HEK293T (cell line): ENCODE measurements at regions of chr11 and their contacts with region 1.

Region 1: GRCh38 chr11:46593550-46594373 is at the start of gene AMBRA1:
- DNase-seq: peak; percentile 77

Region 2: DNA sequence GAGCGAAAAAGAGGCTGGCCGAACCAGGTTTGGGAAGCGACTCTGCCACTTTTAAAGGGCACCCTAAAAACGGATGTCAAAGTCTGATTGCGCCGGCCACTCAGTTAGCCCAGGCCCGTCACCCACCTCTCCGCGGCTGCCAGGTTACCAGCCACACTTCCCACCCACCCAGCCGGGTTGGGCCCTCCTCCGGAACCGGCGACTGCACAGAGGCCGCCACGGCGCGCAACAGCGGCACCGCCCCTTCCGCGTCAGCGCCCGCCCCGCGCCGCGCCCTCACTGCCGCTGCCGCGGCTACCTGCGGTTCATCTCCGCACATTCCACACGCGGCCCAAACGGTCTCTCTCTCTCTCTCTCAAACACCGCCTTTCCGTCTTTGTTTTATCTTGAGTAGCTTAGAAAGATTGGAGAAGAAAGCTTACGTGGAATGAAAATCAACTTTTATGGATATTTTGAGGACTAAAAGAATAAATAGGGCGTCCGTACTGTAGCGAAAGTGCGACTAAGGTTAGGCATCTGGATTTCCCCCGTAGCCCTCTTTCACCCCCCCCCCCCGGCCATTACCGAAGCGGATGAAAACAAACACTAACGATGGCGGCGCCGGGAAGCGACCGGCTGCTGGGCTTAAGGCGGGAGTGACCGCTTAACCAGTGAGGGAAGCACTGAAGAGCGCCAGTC is 23.4 kb after region 1 on chr11 and contains the starts of genes ATG13 and HARBI1:
- CTCF ChIA-PET with region 1: no interaction called
- POLR2A ChIA-PET with region 1: interaction called, 16 read pairs
- DNase-seq: peak; percentile 85

Region 3: DNA sequence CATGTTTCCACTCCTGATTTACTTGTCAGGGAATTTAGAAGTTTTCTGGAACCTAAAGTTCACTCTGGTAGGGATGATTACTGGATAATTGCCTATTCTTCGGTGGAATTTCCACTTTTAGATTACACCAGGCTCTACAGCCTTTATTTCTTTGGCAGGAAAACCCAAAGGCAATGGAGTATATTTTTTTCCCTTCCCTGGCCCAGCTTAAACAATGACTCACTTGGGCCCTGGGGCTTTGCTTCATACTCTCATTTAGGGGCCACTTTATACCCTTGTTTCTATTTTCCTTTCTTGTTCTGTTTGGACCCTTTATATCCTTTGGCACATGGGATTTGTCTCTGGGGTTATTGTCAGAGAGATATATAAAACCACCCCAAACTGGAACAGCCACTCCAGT is 457.5 kb after region 1 on chr11:
- CTCF ChIA-PET with region 1: no interaction called
- POLR2A ChIA-PET with region 1: no interaction called
- DNase-seq: no peak